ENCODE measurements at regions of chr6 and their contacts with region 1.

Region 1: GRCh38 chr6:36099872-36100483 is 30.3 kb upstream of the MAPK13 start:
- DNase-seq: peak in 7 of 14 experiments; percentile 35 to 84 (median 57)
- ATAC-seq: peak; percentile 90
- H3K4me3 ChIP-seq: no peak overlapping the region
- H3K4me3 Mint-ChIP-seq: peak overlapping the region; percentile 17
- H3K27ac ChIP-seq: peak overlapping the region; percentile 1 to 18
- H3K27ac Mint-ChIP-seq: peak overlapping the region; percentile 89
- H3K4me1 ChIP-seq: peaks cover 29% of the 10 kb centered on the region
- H3K4me1 Mint-ChIP-seq: peaks cover 64% of the 10 kb centered on the region
- H3K27me3 ChIP-seq: no peaks in the 10 kb centered on the region
- H3K27me3 Mint-ChIP-seq: no peaks in the 10 kb centered on the region
- CTCF ChIP-seq: no peak

Region 2: GRCh38 chr6:36169023-36170007 is 69.3 kb after region 1 on chr6:
- CTCF ChIA-PET with region 1: no interaction called
- POLR2A ChIA-PET with region 1: no interaction called
- intact Hi-C with region 1: no loop called
- DNase-seq: peak in 1 of 14 experiments; percentile 21
- ATAC-seq: no peak
- H3K4me3 ChIP-seq: no peak overlapping the region
- H3K4me3 Mint-ChIP-seq: no peak overlapping the region
- H3K27ac ChIP-seq: no peak overlapping the region
- H3K27ac Mint-ChIP-seq: no peak overlapping the region
- H3K4me1 ChIP-seq: no peaks in the 10 kb centered on the region
- H3K4me1 Mint-ChIP-seq: no peaks in the 10 kb centered on the region
- H3K27me3 ChIP-seq: no peaks in the 10 kb centered on the region
- H3K27me3 Mint-ChIP-seq: no peaks in the 10 kb centered on the region
- CTCF ChIP-seq: no peak

Region 3: DNA sequence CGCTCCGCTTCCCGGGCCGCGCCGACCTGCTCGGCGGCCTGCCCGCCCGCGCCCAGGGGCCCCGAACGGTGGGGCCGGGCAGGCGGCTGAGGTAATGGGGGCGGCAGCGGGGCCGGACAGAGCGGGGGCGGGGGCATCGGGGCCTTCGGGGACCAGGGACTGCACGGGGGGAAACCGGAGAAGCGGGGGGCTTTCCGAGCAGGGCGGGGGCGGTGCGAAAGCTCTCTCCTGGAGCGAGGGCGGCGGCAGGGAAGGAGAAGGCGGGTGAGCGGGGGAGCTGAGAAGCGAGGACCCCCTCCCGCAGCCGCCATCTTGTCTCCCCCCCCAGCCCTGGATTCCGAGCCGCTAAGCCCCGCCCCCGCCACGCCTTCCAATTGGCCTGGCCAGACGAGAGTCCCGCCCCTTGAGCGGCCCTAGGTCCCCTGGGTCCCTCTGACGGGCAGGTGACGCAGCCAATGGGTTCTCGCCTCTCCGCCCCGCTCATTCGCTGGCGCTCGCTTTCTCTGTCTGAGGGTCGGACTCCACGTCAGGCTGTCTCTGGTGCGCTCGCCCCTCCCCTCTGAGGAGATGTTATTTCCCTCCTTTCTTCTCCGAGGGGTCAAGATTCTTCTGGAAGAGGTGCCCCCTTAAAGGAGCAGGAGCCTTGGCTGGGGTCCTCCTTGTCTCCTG is 97.0 kb after region 1 on chr6:
- CTCF ChIA-PET with region 1: interaction called, 6 read pairs
- POLR2A ChIA-PET with region 1: interaction called, 3 read pairs
- intact Hi-C with region 1: loop called (anchors 1 to 2 kb)
- DNase-seq: peak; percentile 99 to 100 (median 100)
- ATAC-seq: peak; percentile 87
- H3K4me3 ChIP-seq: peak overlapping the region; percentile 68
- H3K4me3 Mint-ChIP-seq: peak overlapping the region; percentile 96
- H3K27ac ChIP-seq: peak overlapping the region; percentile 65 to 79
- H3K27ac Mint-ChIP-seq: peak overlapping the region; percentile 96
- H3K4me1 ChIP-seq: peaks cover 48% of the 10 kb centered on the region
- H3K4me1 Mint-ChIP-seq: peaks cover 61% of the 10 kb centered on the region
- H3K27me3 ChIP-seq: no peaks in the 10 kb centered on the region
- H3K27me3 Mint-ChIP-seq: no peaks in the 10 kb centered on the region
- CTCF ChIP-seq: no peak

Region 4: DNA sequence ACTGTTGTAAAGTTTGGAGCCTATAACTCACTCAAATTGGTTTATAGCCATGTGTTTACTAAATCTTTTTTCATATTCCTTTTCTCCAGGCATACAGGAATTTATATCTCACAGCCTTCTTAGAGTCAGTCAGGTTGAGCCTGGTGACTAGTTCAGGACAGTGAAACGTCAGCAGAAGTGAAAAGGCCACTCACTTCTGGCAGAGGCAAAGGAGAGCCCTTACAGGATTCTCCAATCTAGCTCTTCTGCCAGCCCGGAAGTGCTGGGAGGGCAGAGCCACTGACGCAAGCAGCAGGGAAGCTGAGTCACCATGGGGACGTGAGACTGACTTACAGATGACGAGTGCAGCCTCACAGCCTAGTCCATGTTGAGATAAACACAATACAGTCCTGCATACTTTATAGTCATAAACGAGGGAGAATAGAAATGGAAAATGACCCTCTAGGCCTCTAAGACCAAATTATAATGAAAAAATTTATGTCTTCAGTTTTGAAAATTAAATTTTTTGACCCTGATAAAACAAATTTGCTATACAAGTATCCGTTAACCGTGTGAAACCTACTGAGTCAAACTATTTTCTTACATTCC is 341.4 kb after region 1 on chr6:
- CTCF ChIA-PET with region 1: no interaction called
- POLR2A ChIA-PET with region 1: no interaction called
- intact Hi-C with region 1: no loop called
- DNase-seq: peak; percentile 57 to 93 (median 72)
- ATAC-seq: peak; percentile 73
- H3K4me3 ChIP-seq: no peak overlapping the region
- H3K4me3 Mint-ChIP-seq: peak overlapping the region; percentile 99
- H3K27ac ChIP-seq: peak overlapping the region; percentile 26 to 92
- H3K27ac Mint-ChIP-seq: peak overlapping the region; percentile 97
- H3K4me1 ChIP-seq: peaks cover 26% of the 10 kb centered on the region
- H3K4me1 Mint-ChIP-seq: peaks cover 49% of the 10 kb centered on the region
- H3K27me3 ChIP-seq: no peaks in the 10 kb centered on the region
- H3K27me3 Mint-ChIP-seq: no peaks in the 10 kb centered on the region
- CTCF ChIP-seq: no peak

Measured in CD4-positive, alpha-beta T cell (primary cell).